ENCODE measurements at regions of chr19 and their contacts with region 1.

Region 1: DNA sequence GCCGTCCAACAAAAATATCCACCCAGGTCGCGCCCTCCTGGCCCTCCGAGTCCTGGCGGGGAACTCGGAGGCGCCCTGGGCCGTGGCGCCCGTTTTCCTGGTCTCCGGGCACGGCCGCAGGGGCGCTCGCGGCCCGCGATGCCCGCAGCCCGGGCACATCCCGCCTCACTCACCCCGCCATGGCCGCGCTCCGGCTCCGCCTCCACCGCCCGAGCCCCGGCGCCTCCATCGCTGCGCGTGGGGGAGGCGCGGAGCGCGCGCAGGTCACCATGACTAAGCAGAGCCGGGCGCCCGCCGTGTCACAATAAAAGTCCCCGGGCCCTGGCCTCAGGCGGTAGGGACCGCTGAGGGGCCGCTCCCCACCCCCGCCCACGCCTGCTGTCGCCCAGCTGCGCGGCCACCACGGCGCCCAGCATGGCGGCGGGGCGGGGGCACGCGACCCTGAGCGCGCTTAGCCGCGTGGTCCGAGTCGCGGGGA is 593 bp downstream of the KEAP1 start:
- DNase-seq: peak; percentile 71 to 95 (median 81)
- ATAC-seq: peak; percentile 94
- H3K4me3 ChIP-seq: peak overlapping the region; percentile 88
- H3K4me3 Mint-ChIP-seq: peak overlapping the region; percentile 72 to 96 (median 86)
- H3K27ac ChIP-seq: peak overlapping the region; percentile 83
- H3K27ac Mint-ChIP-seq: peak overlapping the region in 8 of 9 donors; percentile 69 to 91 (median 78)
- H3K4me1 ChIP-seq: peaks cover under 1 to 8% of the 10 kb centered on the region in 2 donors
- H3K4me1 Mint-ChIP-seq: peaks cover 22 to 42% (median 36%) of the 10 kb centered on the region in 7 donors
- H3K27me3 ChIP-seq: no peaks in the 10 kb centered on the region
- H3K27me3 Mint-ChIP-seq: peaks cover 0 to 3% (median 0%) of the 10 kb centered on the region in 5 donors

Region 2: GRCh38 chr19:10543420-10544241 is 41.1 kb after region 1 on chr19 and contains the start of gene ATG4D:
- CTCF ChIA-PET with region 1: no interaction called
- POLR2A ChIA-PET with region 1: interaction called, 3 read pairs
- intact Hi-C with region 1: loop called in 1 of 2 experiments (anchors 1 kb)
- DNase-seq: peak; percentile 77 to 90 (median 84)
- ATAC-seq: peak; percentile 93
- H3K4me3 ChIP-seq: peak within 1 kb of the TSS; percentile 83
- H3K4me3 Mint-ChIP-seq: peak within 1 kb of the TSS; percentile 83 to 93 (median 88)
- H3K27ac ChIP-seq: peak within 1 kb of the TSS; percentile 96
- H3K27ac Mint-ChIP-seq: peak within 1 kb of the TSS; percentile 72 to 91 (median 87)
- H3K4me1 ChIP-seq: peaks cover 13 to 19% of the 10 kb centered on the region in 2 donors
- H3K4me1 Mint-ChIP-seq: peaks cover 8 to 27% (median 16%) of the 10 kb centered on the region in 7 donors
- H3K27me3 ChIP-seq: no peaks in the 10 kb centered on the region
- H3K27me3 Mint-ChIP-seq: peaks cover 4 to 28% (median 5%) of the 10 kb centered on the region in 5 donors
- total RNA-seq, gene ATG4D: 41.7 to 70.3 (median 56.7) TPM

Region 3: DNA sequence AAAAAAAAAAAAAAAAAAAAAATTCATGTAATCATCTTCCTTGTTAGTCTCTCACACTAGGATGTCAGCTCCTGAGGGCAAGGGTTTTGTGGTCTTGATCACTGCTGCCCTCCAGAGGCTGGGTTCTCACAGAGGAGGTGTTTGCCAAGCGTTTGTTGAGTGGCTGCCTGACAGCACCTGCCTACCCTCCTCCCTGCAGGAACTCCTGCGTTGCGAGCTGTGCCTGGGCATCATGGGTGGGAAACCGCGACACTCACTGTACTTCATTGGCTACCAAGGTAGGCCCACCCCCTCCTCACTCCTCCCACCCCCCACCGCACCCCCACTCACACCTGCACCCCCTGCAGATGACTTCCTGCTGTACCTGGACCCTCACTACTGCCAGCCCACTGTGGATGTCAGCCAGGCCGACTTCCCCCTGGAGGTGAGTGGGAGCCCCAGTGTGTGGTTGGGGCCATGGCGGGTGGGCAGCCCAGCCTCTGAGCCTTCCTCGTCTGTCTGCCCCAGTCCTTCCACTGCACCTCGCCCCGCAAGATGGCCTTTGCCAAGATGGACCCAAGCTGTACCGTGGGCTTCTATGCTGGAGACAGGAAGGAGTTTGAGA is 49.2 kb after region 1 on chr19:
- CTCF ChIA-PET with region 1: no interaction called
- POLR2A ChIA-PET with region 1: no interaction called
- intact Hi-C with region 1: loop called (anchors 1 to 5 kb)
- DNase-seq: peak in 6 of 9 donors; percentile 23 to 42 (median 35)
- ATAC-seq: peak; percentile 24
- H3K4me3 ChIP-seq: no peak overlapping the region
- H3K4me3 Mint-ChIP-seq: peak overlapping the region in 2 of 10 donors; percentile 25 to 42
- H3K27ac ChIP-seq: peak overlapping the region; percentile 66
- H3K27ac Mint-ChIP-seq: peak overlapping the region; percentile 44 to 96 (median 76)
- H3K4me1 ChIP-seq: peaks cover 41 to 54% of the 10 kb centered on the region in 2 donors
- H3K4me1 Mint-ChIP-seq: peaks cover 22 to 63% (median 41%) of the 10 kb centered on the region in 7 donors
- H3K27me3 ChIP-seq: no peaks in the 10 kb centered on the region
- H3K27me3 Mint-ChIP-seq: no peaks in the 10 kb centered on the region

Region 4: GRCh38 chr19:10695401-10696398 is 193.1 kb after region 1 on chr19:
- CTCF ChIA-PET with region 1: interaction called, 7 read pairs
- POLR2A ChIA-PET with region 1: no interaction called
- intact Hi-C with region 1: loop called in 1 of 2 experiments (anchors 5 kb)
- DNase-seq: peak; percentile 79 to 90 (median 85)
- ATAC-seq: peak; percentile 99
- H3K4me3 ChIP-seq: peak overlapping the region; percentile 36
- H3K4me3 Mint-ChIP-seq: peak overlapping the region; percentile 81 to 89 (median 86)
- H3K27ac ChIP-seq: no peak overlapping the region
- H3K27ac Mint-ChIP-seq: peak overlapping the region in 8 of 9 donors; percentile 9 to 88 (median 56)
- H3K4me1 ChIP-seq: peaks cover 4 to 10% of the 10 kb centered on the region in 2 donors
- H3K4me1 Mint-ChIP-seq: peaks cover 12 to 25% (median 21%) of the 10 kb centered on the region in 7 donors
- H3K27me3 ChIP-seq: no peaks in the 10 kb centered on the region
- H3K27me3 Mint-ChIP-seq: peaks cover 0 to 11% (median 0%) of the 10 kb centered on the region in 5 donors